Breast epithelium (tissue), 4 donors: ENCODE measurements at regions of chr5 and their contacts with region 1.

Region 1: DNA sequence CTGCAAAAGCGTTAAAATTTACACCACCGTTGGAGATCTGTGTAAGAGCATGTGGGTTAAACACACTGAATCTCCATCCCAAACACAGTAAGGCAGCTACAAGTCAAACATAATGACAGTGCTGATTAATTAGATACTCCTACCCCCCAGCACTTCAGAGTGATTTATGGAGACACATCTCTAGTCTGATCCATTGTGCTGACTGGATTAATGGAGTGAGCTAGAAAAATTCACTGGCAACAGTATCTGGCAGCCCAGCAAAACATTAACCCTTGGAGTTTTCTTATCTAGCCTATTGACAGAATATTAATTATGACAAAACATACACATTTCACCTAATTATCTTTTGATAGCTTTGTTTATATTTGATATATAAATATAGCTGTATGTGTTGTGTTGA is 188.6 kb upstream of the ISL1 start:
- DNase-seq: no peak
- H3K4me3 ChIP-seq: no peak overlapping the region
- H3K27ac ChIP-seq: no peak overlapping the region
- H3K4me1 ChIP-seq: no peaks in the 10 kb centered on the region
- H3K27me3 ChIP-seq: no peaks in the 10 kb centered on the region
- CTCF ChIP-seq: no peak
- POLR2A ChIP-seq: no peak

Region 2: DNA sequence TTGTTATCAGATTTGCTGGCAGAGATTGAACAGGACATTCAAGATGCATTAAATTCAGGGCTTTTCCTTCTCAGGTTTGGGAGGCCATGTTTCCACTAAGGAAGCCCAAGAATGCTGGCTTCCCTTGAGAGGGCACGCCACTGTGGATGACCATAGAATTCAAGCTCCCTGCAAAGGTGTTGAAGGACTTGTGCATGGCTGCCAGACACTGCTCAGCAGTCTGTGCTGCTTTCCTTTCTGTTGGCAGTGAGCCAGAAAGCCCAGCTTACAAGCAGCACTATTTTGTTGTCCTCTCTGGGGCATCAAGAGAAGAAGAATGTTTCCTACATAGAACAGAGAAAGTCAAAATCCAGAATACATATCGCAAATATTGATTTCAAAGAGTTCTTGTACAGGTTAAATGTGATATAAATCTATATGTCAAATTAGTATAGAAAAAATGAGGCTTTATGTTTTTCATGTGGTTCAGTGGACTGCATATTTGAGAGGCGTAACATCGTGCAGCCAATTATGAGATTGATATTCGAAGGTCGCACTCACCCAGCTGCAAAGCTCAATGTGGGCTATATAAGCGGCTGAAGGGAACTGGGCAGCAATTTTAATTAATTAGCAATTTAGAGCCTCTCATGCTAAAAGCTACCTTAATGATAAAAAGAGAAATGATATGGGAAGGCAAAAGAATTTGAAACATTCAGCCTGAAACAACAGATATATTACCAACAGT is 85.5 kb after region 1 on chr5:
- intact Hi-C with region 1: loop called (anchors 10 kb)
- DNase-seq: no peak
- H3K4me3 ChIP-seq: no peak overlapping the region
- H3K27ac ChIP-seq: no peak overlapping the region
- H3K4me1 ChIP-seq: no peaks in the 10 kb centered on the region
- H3K27me3 ChIP-seq: no peaks in the 10 kb centered on the region
- CTCF ChIP-seq: no peak
- POLR2A ChIP-seq: no peak